Prostate gland (tissue), 2 donors: ENCODE measurements at regions of chr6 and their contacts with region 1.

Region 1: DNA sequence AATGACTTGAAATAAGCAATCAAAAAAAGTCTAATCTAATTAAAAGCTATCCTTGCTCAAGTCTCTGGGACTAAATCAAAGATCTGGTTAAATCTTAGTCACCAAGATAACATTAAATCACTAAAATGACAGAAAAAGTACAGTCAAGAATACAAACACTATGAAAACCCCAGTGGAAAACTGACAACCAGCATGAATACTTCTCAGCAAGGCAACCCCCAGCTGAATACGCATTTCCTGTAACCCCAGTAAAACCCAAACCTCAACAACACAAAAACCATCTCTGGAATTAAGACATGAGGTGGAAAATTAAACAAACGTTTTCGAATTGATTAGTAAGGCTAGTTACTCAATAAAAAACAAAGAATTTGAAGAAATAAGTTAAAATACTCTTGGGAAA is 23.7 kb upstream of the ZC3H12D start:
- DNase-seq: no peak
- H3K4me3 ChIP-seq: no peak overlapping the region
- H3K27ac ChIP-seq: no peak overlapping the region
- H3K4me1 ChIP-seq: no peaks in the 10 kb centered on the region
- H3K27me3 ChIP-seq: no peaks in the 10 kb centered on the region
- CTCF ChIP-seq: no peak
- POLR2A ChIP-seq: no peak

Region 2: GRCh38 chr6:149431905-149432775 is 76.3 kb before region 1 on chr6:
- intact Hi-C with region 1: no loop called
- DNase-seq: peak; percentile 87
- H3K4me3 ChIP-seq: no peak overlapping the region
- H3K27ac ChIP-seq: no peak overlapping the region
- H3K4me1 ChIP-seq: no peaks in the 10 kb centered on the region
- H3K27me3 ChIP-seq: no peaks in the 10 kb centered on the region
- CTCF ChIP-seq: peak; percentile 89 to 95 (median 94)
- POLR2A ChIP-seq: no peak

Region 3: GRCh38 chr6:149454386-149454848 is 54.1 kb before region 1 on chr6:
- intact Hi-C with region 1: loop called (anchors 10 kb)
- DNase-seq: peak; percentile 85
- H3K4me3 ChIP-seq: no peak overlapping the region
- H3K27ac ChIP-seq: peak overlapping the region; percentile 52 to 60
- H3K4me1 ChIP-seq: peaks cover 8% of the 10 kb centered on the region
- H3K27me3 ChIP-seq: no peaks in the 10 kb centered on the region
- CTCF ChIP-seq: no peak
- POLR2A ChIP-seq: no peak

Region 4: GRCh38 chr6:149551920-149552319 is 43.4 kb after region 1 on chr6:
- intact Hi-C with region 1: no loop called
- DNase-seq: no peak
- H3K4me3 ChIP-seq: no peak overlapping the region
- H3K27ac ChIP-seq: no peak overlapping the region
- H3K4me1 ChIP-seq: no peaks in the 10 kb centered on the region
- H3K27me3 ChIP-seq: no peaks in the 10 kb centered on the region
- CTCF ChIP-seq: no peak
- POLR2A ChIP-seq: no peak

Region 5: GRCh38 chr6:149717588-149718458 is 209.3 kb after region 1 on chr6 and contains the start of gene LATS1:
- intact Hi-C with region 1: no loop called
- DNase-seq: peak; percentile 87
- H3K4me3 ChIP-seq: peak within 1 kb of the TSS; percentile 77 to 95
- H3K27ac ChIP-seq: peak within 1 kb of the TSS; percentile 97 to 99
- H3K4me1 ChIP-seq: peaks cover 6% of the 10 kb centered on the region
- H3K27me3 ChIP-seq: no peaks in the 10 kb centered on the region
- CTCF ChIP-seq: no peak
- POLR2A ChIP-seq: peak; percentile 65
- total RNA-seq, gene LATS1: 28.7 to 44.8 TPM